ENCODE measurements at regions of chr18 and their contacts with region 1.

Region 1: DNA sequence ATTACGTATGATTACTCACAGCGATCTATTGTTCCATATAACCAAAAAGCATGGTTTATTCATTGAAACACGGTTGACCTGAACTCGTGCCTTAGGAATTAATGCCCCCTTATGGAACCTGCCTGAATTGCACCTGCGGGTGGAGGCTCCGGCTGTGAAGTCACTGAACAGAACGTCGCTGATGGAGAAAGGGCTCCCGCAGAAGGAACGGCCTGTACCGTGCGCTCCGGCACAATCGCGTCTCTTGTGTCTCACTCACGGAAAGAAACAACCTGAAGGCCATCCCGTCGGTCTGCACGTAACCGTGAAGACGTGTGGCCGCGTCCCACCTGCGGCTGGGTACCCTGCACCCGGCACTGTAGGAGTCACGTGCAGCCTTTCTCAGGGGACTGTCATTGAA is 133.1 kb downstream of the NFATC1 start:
- DNase-seq: peak; percentile 78
- ATAC-seq: peak; percentile 84
- H3K4me3 ChIP-seq: no peak overlapping the region
- H3K27ac ChIP-seq: no peak overlapping the region
- H3K4me1 ChIP-seq: no peaks in the 10 kb centered on the region
- H3K27me3 ChIP-seq: no peaks in the 10 kb centered on the region; the same call in 1 of the 2 replicates
- CTCF ChIP-seq: peak; percentile 89

Region 2: DNA sequence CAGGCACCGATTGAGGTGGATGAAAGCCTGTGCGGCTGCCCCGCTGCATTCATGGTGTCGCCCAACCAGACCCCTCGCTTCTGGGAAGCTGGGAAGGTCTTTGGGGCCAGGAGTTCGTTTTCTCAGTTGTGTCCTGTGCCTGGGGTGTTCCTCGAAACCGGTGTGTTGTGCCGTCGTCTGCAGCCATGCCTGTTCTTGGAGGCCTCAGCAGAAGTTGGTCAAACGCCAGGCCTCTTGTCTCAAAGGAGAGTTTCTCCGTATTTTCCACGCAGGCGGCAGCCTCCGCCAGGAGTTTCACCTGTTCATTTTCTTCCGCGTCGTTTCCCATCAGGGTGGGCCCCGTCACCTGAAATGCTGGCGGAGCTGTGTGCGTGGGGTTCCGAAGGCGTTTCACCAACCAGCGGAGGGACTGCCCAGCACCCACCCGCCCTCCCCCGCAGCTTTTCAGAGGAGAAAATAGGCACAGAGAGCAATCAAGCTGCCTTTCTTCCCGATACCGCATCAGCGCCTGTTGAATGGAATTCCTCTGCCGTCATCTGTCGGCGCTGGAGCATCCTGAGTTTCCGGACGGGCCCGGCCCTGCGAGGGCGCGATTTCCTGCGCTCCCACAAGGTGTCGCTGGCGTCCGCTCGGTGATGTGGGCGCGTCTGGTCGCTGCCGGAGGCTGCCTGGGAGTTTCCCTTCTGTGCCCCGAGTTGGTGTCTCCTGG is 150.2 kb before region 1 on chr18:
- CTCF ChIA-PET with region 1: no interaction called
- POLR2A ChIA-PET with region 1: no interaction called
- intact Hi-C with region 1: loop called (anchors 1 kb)
- DNase-seq: peak; percentile 76
- ATAC-seq: peak; percentile 80
- H3K4me3 ChIP-seq: 0 out of 2 replicates have a peak overlapping the region, but pooled peaks have one; percentile 22
- H3K27ac ChIP-seq: no peak overlapping the region
- H3K4me1 ChIP-seq: peaks cover 4% of the 10 kb centered on the region; the same call in 1 of the 2 replicates
- H3K27me3 ChIP-seq: no peaks in the 10 kb centered on the region
- CTCF ChIP-seq: peak; percentile 90

Region 3: DNA sequence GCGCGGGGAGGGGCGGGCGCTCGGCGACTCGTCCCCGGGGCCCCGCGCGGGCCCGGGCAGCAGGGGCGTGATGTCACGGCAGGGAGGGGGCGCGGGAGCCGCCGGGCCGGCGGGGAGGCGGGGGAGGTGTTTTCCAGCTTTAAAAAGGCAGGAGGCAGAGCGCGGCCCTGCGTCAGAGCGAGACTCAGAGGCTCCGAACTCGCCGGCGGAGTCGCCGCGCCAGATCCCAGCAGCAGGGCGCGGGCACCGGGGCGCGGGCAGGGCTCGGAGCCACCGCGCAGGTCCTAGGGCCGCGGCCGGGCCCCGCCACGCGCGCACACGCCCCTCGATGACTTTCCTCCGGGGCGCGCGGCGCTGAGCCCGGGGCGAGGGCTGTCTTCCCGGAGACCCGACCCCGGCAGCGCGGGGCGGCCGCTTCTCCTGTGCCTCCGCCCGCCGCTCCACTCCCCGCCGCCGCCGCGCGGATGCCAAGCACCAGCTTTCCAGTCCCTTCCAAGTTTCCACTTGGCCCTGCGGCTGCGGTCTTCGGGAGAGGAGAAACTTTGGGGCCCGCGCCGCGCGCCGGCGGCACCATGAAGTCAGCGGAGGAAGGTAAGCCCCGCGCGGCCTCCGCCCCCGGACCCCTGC is 133.0 kb before region 1 on chr18 and contains the start of gene NFATC1:
- CTCF ChIA-PET with region 1: no interaction called
- POLR2A ChIA-PET with region 1: no interaction called
- intact Hi-C with region 1: loop called (anchors 5 kb)
- DNase-seq: peak; percentile 59
- ATAC-seq: peak; percentile 41
- H3K4me3 ChIP-seq: peak within 1 kb of the TSS; percentile 70
- H3K27ac ChIP-seq: peak within 1 kb of the TSS; percentile 72
- H3K4me1 ChIP-seq: peaks cover 16% of the 10 kb centered on the region; the same call in 1 of the 2 replicates
- H3K27me3 ChIP-seq: no peaks in the 10 kb centered on the region
- CTCF ChIP-seq: no peak
- total RNA-seq, gene NFATC1: 5.9 and 9.8 TPM in 2 replicates